ENCODE measurements at regions of chr12 and their contacts with region 1.

Region 1: GRCh38 chr12:3803865-3804472 is 51.1 kb upstream of the CRACR2A start:
- DNase-seq: peak; percentile 46 to 70 (median 52)
- ATAC-seq: peak; percentile 92
- H3K4me3 ChIP-seq: no peak overlapping the region
- H3K27ac ChIP-seq: no peak overlapping the region
- H3K4me1 ChIP-seq: no peaks in the 10 kb centered on the region
- H3K27me3 ChIP-seq: no peaks in the 10 kb centered on the region; a peak in 1 of 5 replicates
- CTCF ChIP-seq: peak; percentile 74 to 82 (median 76)
- EP300 ChIP-seq: no peak
- POLR2A ChIP-seq: no peak
- RAD21 ChIP-seq: peak; percentile 52 to 76

Region 2: DNA sequence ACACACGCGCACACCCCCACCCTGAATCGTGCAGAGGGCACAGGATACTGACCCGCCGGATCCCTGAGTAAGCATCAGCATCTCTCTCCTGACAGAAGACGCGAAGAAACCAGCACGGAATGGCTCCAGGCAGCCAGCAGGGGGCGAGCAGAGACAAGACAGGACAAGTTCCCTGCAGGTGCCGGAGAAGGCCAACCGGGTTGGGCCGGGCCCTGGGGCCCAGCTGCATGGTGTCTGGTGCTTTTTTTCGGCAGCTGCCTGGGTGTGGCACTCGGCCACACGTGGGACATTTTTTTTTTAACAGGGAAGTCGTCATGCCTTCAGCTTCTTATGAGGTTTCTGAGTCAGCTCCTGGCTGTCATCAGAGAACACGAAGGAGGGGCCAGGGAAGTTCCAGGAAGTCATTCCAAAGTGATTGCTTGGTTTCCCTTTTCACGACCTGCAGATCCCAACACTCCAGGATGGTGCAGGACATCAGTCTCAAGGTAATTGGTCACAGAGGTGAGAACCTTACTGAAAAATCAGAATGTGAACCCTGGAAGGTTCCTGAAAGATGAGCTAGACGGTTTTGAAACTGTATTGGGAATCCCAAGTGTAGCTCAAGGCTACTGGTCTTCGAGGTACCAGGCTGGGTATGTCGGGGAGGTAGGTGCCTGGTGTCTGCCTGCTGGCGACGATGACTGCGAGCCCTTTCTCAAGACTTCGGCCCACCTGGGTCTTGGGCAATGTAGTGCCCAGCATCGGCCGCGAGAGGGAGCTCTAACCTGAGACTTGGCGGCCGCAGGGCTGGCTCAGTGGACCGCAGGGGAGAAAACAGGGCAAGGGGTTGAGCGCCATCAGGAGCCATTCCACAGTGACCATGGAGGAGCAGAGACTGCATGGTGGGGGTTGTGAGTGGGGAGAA is 503.8 kb before region 1 on chr12:
- CTCF ChIA-PET with region 1: interaction called, 16 read pairs
- POLR2A ChIA-PET with region 1: no interaction called
- in situ Hi-C with region 1: loop called (anchors 5 kb)
- intact Hi-C with region 1: loop called (anchors 1 kb)
- DNase-seq: peak; percentile 71 to 76 (median 75)
- ATAC-seq: peak; percentile 89
- H3K4me3 ChIP-seq: no peak overlapping the region
- H3K27ac ChIP-seq: no peak overlapping the region
- H3K4me1 ChIP-seq: peaks cover 0 to 3% of the 10 kb centered on the region in 2 experiments; a peak in 1 of 5 replicates
- H3K27me3 ChIP-seq: peaks cover 0 to 42% of the 10 kb centered on the region in 2 experiments; a peak in 2 of 5 replicates
- CTCF ChIP-seq: peak; percentile 71 to 82 (median 79)
- EP300 ChIP-seq: no peak
- POLR2A ChIP-seq: no peak
- RAD21 ChIP-seq: peak; percentile 38 to 75

Region 3: GRCh38 chr12:3381059-3382047 is 422.6 kb before region 1 on chr12:
- CTCF ChIA-PET with region 1: no interaction called
- POLR2A ChIA-PET with region 1: no interaction called
- in situ Hi-C with region 1: no loop called
- intact Hi-C with region 1: no loop called
- DNase-seq: no peak
- ATAC-seq: no peak
- H3K4me3 ChIP-seq: no peak overlapping the region
- H3K27ac ChIP-seq: no peak overlapping the region
- H3K4me1 ChIP-seq: no peaks in the 10 kb centered on the region
- H3K27me3 ChIP-seq: no peaks in the 10 kb centered on the region
- CTCF ChIP-seq: no peak
- EP300 ChIP-seq: no peak
- POLR2A ChIP-seq: no peak
- RAD21 ChIP-seq: no peak

Region 4: DNA sequence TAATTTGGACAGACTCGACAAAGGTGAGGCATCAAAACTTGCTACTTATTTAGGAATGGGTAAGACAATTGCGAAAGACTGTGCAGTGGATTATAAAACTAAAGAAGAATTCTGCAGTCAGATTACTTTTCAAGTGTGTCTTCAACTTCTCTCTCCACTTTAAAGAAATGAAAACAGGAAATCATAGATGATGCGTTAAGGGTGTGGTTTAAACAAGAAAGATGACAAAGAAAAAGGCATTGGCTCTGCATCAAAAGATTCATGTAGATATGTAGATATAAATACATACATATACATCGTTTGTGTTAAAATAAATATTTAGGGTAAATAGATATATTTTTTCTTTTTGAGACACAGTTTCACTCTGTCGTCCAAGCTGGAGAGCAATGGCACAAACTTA is 143.8 kb after region 1 on chr12:
- CTCF ChIA-PET with region 1: no interaction called
- POLR2A ChIA-PET with region 1: no interaction called
- in situ Hi-C with region 1: no loop called
- intact Hi-C with region 1: no loop called
- DNase-seq: no peak
- ATAC-seq: no peak
- H3K4me3 ChIP-seq: no peak overlapping the region
- H3K27ac ChIP-seq: no peak overlapping the region
- H3K4me1 ChIP-seq: no peaks in the 10 kb centered on the region
- H3K27me3 ChIP-seq: peaks cover 0 to 5% of the 10 kb centered on the region in 2 experiments; a peak in 1 of 5 replicates
- CTCF ChIP-seq: no peak
- EP300 ChIP-seq: no peak
- POLR2A ChIP-seq: no peak
- RAD21 ChIP-seq: no peak

Measured in K562 (cell line).